HAP-1 (cell line): ENCODE measurements at regions of chr17 and their contacts with region 1.

Region 1: GRCh38 chr17:76523084-76524037 is 14.1 kb downstream of the CYGB start:
- DNase-seq: peak; percentile 52 to 86
- H3K4me3 ChIP-seq: no peak overlapping the region
- H3K4me1 ChIP-seq: no peaks in the 10 kb centered on the region
- H3K27me3 ChIP-seq: no peaks in the 10 kb centered on the region

Region 2: GRCh38 chr17:76318586-76318985 is 204.8 kb before region 1 on chr17:
- in situ Hi-C with region 1: no loop called
- DNase-seq: no peak
- H3K4me3 ChIP-seq: no peak overlapping the region
- H3K4me1 ChIP-seq: peaks cover 6% of the 10 kb centered on the region
- H3K27me3 ChIP-seq: no peaks in the 10 kb centered on the region

Region 3: GRCh38 chr17:76569607-76570279 is 46.4 kb after region 1 on chr17:
- in situ Hi-C with region 1: no loop called
- DNase-seq: no peak
- H3K4me3 ChIP-seq: no peak overlapping the region
- H3K4me1 ChIP-seq: no peaks in the 10 kb centered on the region
- H3K27me3 ChIP-seq: no peaks in the 10 kb centered on the region

Region 4: DNA sequence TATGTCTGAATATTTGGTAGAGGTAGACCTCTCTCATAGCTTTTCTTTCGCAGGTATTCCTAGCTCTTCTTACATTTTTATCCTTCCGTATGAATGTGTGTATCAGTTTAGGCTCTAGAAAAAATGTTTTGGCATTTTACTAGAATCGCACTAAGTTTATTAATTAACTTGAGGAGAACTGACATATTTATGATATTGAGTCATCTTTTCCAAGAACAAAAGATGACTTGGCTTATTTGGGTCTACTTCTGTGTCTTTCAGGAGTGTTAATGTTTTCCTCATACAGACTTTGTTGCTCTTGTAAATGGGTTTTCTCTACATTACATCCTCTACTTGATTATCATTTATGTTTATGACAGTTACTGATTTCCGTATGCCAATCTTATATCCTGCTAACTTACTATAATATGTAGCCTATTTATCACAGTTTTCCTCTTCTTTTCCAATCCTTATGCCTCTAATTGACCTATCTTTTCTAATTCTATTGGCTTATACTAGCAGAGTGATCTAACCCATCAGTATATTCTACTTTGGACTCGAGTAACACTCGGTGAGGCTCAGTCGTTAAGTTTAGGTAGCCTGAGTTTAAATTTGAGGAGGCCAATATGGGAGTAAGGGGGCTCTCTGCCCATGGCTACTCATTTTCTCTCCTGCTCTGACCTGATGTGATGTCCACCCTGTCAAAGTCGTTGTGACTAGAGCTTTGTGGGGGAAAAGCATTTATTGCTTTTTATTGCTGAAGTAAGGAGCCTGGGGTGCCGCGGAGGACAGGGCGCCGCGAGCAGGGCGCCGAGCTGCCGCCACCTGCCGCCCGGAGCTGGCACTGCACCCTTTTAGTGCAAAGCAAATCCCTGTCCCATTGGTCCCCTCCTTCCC is 100.1 kb after region 1 on chr17:
- in situ Hi-C with region 1: loop called (anchors 10 kb)
- DNase-seq: peak; percentile 64 to 88
- H3K4me3 ChIP-seq: no peak overlapping the region
- H3K4me1 ChIP-seq: no peaks in the 10 kb centered on the region
- H3K27me3 ChIP-seq: 0 out of 2 replicates have a peak, but pooled peaks cover 4% of the 10 kb centered on the region